ENCODE measurements at regions of chr3 and their contacts with region 1.

Region 1: DNA sequence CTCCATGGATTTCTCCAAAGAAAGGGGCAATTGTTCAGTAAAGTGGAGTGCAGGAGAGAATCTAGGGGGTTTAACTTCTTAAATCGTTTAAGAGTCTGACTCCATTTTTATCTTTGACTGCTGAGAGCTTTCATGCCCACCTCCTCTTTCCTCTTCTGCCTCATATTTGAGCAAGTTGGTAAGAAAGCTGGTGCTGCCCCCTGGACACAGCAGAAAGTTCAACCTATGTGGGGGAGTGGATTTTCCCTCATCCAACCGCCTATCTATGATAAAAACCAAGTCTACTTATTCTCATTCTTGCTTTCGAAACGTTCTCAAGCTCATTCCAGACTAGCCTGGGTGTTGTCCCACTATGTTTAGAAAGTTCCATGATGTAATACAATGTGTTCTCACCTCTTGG is 26.0 kb downstream of the HHLA2 start:
- DNase-seq: no peak
- ATAC-seq: peak; percentile 91
- H3K4me3 Mint-ChIP-seq: no peak overlapping the region
- H3K27ac Mint-ChIP-seq: peak overlapping the region; percentile 57
- H3K4me1 Mint-ChIP-seq: peaks cover 14% of the 10 kb centered on the region
- H3K27me3 Mint-ChIP-seq: no peaks in the 10 kb centered on the region
- CTCF ChIP-seq: no peak

Region 2: GRCh38 chr3:107855708-107856107 is 466.6 kb before region 1 on chr3:
- CTCF ChIA-PET with region 1: no interaction called
- POLR2A ChIA-PET with region 1: no interaction called
- intact Hi-C with region 1: loop called (anchors 5 kb)
- DNase-seq: no peak
- ATAC-seq: peak; percentile 65
- H3K4me3 Mint-ChIP-seq: no peak overlapping the region
- H3K27ac Mint-ChIP-seq: no peak overlapping the region
- H3K4me1 Mint-ChIP-seq: no peaks in the 10 kb centered on the region
- H3K27me3 Mint-ChIP-seq: no peaks in the 10 kb centered on the region
- CTCF ChIP-seq: no peak

Region 3: GRCh38 chr3:107938143-107938542 is 384.2 kb before region 1 on chr3:
- CTCF ChIA-PET with region 1: interaction called, 14 read pairs
- POLR2A ChIA-PET with region 1: no interaction called
- intact Hi-C with region 1: loop called (anchors 1 kb)
- DNase-seq: no peak
- ATAC-seq: no peak
- H3K4me3 Mint-ChIP-seq: no peak overlapping the region
- H3K27ac Mint-ChIP-seq: no peak overlapping the region
- H3K4me1 Mint-ChIP-seq: no peaks in the 10 kb centered on the region
- H3K27me3 Mint-ChIP-seq: peaks cover 3% of the 10 kb centered on the region
- CTCF ChIP-seq: no peak

Region 4: DNA sequence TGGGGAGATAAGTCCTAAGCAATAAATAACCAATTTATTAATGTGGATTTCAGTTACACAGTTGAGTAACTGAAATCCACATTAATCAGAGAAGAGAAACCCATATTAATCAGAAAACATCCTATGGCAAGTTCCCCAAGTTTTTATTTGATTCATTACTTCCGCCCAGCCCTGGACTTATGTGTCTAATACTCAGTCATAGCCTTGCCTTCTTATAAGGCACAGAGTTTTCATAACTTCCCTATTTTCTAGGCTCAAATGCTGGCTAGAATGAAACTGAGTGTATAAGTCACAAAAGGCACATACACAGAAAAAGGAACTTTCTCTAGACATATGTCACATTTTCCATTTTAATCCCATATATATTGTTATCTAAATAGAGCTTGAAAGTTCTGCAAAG is 260.3 kb before region 1 on chr3:
- CTCF ChIA-PET with region 1: no interaction called
- POLR2A ChIA-PET with region 1: no interaction called
- intact Hi-C with region 1: loop called (anchors 5 kb)
- DNase-seq: no peak
- ATAC-seq: peak; percentile 93
- H3K4me3 Mint-ChIP-seq: peak overlapping the region; percentile 11
- H3K27ac Mint-ChIP-seq: peak overlapping the region; percentile 66
- H3K4me1 Mint-ChIP-seq: peaks cover 81% of the 10 kb centered on the region
- H3K27me3 Mint-ChIP-seq: no peaks in the 10 kb centered on the region
- CTCF ChIP-seq: no peak

Region 5: GRCh38 chr3:108271626-108272025 is 50.7 kb before region 1 on chr3:
- CTCF ChIA-PET with region 1: no interaction called
- POLR2A ChIA-PET with region 1: no interaction called
- intact Hi-C with region 1: no loop called
- DNase-seq: no peak
- ATAC-seq: no peak
- H3K4me3 Mint-ChIP-seq: no peak overlapping the region
- H3K27ac Mint-ChIP-seq: no peak overlapping the region
- H3K4me1 Mint-ChIP-seq: no peaks in the 10 kb centered on the region
- H3K27me3 Mint-ChIP-seq: no peaks in the 10 kb centered on the region
- CTCF ChIP-seq: no peak

Region 6: DNA sequence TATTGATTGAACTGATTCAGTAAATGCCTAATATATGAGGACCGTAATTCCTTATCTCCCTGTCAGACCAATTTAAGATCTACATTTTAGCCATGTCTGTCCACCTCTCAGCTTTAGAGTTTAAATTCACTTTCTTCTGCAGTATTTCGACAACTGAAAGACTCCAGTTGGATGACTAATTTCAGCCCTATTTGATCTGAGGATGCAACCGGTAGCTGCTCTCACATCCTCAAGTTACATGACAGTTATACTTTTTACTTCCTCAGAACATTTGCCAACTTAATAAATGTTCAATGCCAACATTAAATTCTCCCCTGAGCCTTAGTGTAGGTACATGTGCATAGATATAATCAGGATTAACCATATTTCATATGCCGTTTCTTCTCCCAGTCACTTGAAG is 28.5 kb before region 1 on chr3:
- CTCF ChIA-PET with region 1: no interaction called
- POLR2A ChIA-PET with region 1: no interaction called
- intact Hi-C with region 1: no loop called
- DNase-seq: no peak
- ATAC-seq: peak; percentile 74
- H3K4me3 Mint-ChIP-seq: no peak overlapping the region
- H3K27ac Mint-ChIP-seq: peak overlapping the region; percentile 39
- H3K4me1 Mint-ChIP-seq: peaks cover 51% of the 10 kb centered on the region
- H3K27me3 Mint-ChIP-seq: no peaks in the 10 kb centered on the region
- CTCF ChIP-seq: no peak

Region 7: DNA sequence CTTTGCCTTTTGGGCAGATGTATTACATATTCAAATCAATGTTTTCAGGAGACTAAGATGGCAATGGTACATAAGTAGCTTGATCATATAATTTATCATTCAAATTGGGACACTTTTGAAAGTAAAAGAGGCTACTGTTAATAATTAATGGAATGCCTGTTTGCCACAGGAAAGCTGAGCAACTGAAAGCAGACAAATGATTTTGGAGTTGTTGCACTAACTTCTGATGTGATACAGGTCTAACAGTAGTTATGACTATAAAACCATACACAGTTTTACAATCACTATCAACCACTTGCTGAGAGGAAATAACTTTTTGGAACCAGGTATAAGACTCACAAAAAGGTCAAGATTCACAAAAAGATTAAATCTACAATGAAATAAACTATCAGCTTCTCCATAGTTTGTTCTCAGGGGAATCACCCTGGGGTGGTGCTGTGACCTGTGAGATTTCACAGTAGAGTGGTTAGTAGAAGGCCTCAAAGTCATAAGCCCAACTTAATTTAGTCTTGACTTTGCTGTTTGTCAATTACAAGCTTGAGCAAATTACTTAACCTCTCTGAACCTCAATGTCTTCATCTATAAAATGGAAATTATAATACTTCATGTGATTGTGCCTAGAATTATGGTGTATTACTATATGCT is 16.7 kb after region 1 on chr3:
- CTCF ChIA-PET with region 1: no interaction called
- POLR2A ChIA-PET with region 1: no interaction called
- intact Hi-C with region 1: no loop called
- DNase-seq: no peak
- ATAC-seq: peak; percentile 31
- H3K4me3 Mint-ChIP-seq: no peak overlapping the region
- H3K27ac Mint-ChIP-seq: no peak overlapping the region
- H3K4me1 Mint-ChIP-seq: peaks cover 18% of the 10 kb centered on the region
- H3K27me3 Mint-ChIP-seq: no peaks in the 10 kb centered on the region
- CTCF ChIP-seq: no peak

Region 8: DNA sequence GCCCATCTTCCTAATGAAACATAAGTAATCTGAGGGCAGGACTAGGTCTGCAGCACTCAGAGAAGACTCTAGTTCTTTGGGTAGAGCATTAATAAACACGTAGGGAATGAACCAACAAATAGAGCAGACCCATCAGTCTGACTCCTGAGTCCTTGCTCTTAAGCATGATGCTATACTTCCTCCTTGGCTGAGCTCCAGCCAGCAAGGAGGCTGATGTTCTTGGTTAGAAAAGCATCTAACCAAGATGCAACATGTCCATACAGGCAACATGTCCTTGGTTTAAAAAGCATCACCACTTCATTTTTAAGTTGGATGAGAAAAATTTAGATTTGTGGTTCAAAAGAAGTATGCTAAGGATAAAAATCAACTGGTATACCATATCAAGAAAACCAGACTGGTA is 196.5 kb after region 1 on chr3:
- CTCF ChIA-PET with region 1: no interaction called
- POLR2A ChIA-PET with region 1: no interaction called
- intact Hi-C with region 1: no loop called
- DNase-seq: no peak
- ATAC-seq: no peak
- H3K4me3 Mint-ChIP-seq: no peak overlapping the region
- H3K27ac Mint-ChIP-seq: no peak overlapping the region
- H3K4me1 Mint-ChIP-seq: no peaks in the 10 kb centered on the region
- H3K27me3 Mint-ChIP-seq: no peaks in the 10 kb centered on the region
- CTCF ChIP-seq: no peak